ENCODE measurements at regions of chr6 and their contacts with region 1.

Region 1: DNA sequence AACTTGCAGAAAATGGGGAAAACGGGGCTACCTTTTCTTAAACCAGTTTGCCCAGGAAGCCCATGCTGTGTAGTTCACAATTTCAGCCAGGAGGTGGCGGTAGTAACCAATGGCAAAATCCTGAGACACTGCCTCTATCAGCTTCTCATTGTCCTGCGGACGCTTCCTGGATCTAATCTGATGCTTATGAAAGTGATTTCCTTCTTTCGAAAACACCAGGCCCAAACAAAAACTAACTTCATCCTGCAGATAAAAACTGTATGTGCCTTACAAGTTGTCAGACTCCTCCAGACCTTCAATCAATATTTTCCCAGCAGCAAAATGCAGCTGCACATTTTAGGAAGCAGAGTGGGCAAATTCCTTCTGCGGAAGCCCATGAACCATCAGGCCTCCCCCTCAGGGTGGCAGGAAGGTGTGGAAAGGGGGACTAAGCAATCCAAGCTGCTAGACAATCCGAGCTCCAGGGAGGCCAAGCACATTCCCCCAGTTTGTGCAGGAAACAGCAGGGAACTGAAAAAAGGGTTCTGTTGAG is 88.5 kb downstream of the LY86 start:
- DNase-seq: peak; percentile 64 to 95
- H3K4me3 ChIP-seq: no peak overlapping the region
- H3K27ac ChIP-seq: no peak overlapping the region
- H3K4me1 ChIP-seq: peaks cover 5 to 15% (median 11%) of the 10 kb centered on the region in 4 experiments
- H3K27me3 ChIP-seq: no peaks in the 10 kb centered on the region; a peak in 1 of 7 replicates
- CTCF ChIP-seq: peak; percentile 59 to 88 (median 86)
- EP300 ChIP-seq: no peak
- POLR2A ChIP-seq: no peak
- RAD21 ChIP-seq: peak; percentile 95

Region 2: GRCh38 chr6:6379573-6379972 is 297.4 kb before region 1 on chr6:
- CTCF ChIA-PET with region 1: no interaction called
- POLR2A ChIA-PET with region 1: no interaction called
- DNase-seq: no peak
- H3K4me3 ChIP-seq: no peak overlapping the region
- H3K27ac ChIP-seq: no peak overlapping the region
- H3K4me1 ChIP-seq: peaks cover 0 to 5% (median 3%) of the 10 kb centered on the region in 4 experiments; a peak in 4 of 7 replicates
- H3K27me3 ChIP-seq: no peaks in the 10 kb centered on the region
- CTCF ChIP-seq: no peak
- EP300 ChIP-seq: no peak
- POLR2A ChIP-seq: no peak
- RAD21 ChIP-seq: no peak

Region 3: GRCh38 chr6:6696867-6697531 is 20.0 kb after region 1 on chr6:
- CTCF ChIA-PET with region 1: interaction called, 87 read pairs
- POLR2A ChIA-PET with region 1: interaction called, 3 read pairs
- DNase-seq: peak; percentile 43 to 88
- H3K4me3 ChIP-seq: no peak overlapping the region
- H3K27ac ChIP-seq: no peak overlapping the region
- H3K4me1 ChIP-seq: peaks cover 19 to 28% (median 20%) of the 10 kb centered on the region in 4 experiments
- H3K27me3 ChIP-seq: no peaks in the 10 kb centered on the region; a peak in 1 of 7 replicates
- CTCF ChIP-seq: peak; percentile 85 to 88 (median 86)
- EP300 ChIP-seq: no peak
- POLR2A ChIP-seq: no peak
- RAD21 ChIP-seq: peak; percentile 85 to 92

Region 4: GRCh38 chr6:6724539-6725467 is 47.8 kb after region 1 on chr6:
- CTCF ChIA-PET with region 1: interaction called, 38 read pairs
- POLR2A ChIA-PET with region 1: no interaction called
- DNase-seq: peak; percentile 66 to 83
- H3K4me3 ChIP-seq: peak overlapping the region in 3 of 4 experiments; percentile 10 to 51 (median 27); a peak in 5 of 8 replicates
- H3K27ac ChIP-seq: peak overlapping the region; percentile 5; the same call in 1 of the 2 replicates
- H3K4me1 ChIP-seq: peaks cover 12 to 25% (median 20%) of the 10 kb centered on the region in 4 experiments
- H3K27me3 ChIP-seq: peaks cover 0 to 11% (median 2%) of the 10 kb centered on the region in 4 experiments; a peak in 2 of 7 replicates
- CTCF ChIP-seq: peak; percentile 53 to 62 (median 54); a peak in 3 of 4 replicates
- EP300 ChIP-seq: peak in 1 of 2 experiments; percentile 64; a peak in 1 of 3 replicates
- POLR2A ChIP-seq: peak in 1 of 2 experiments; percentile 67; a peak in 2 of 3 replicates
- RAD21 ChIP-seq: peak; percentile 82 to 85

Region 5: DNA sequence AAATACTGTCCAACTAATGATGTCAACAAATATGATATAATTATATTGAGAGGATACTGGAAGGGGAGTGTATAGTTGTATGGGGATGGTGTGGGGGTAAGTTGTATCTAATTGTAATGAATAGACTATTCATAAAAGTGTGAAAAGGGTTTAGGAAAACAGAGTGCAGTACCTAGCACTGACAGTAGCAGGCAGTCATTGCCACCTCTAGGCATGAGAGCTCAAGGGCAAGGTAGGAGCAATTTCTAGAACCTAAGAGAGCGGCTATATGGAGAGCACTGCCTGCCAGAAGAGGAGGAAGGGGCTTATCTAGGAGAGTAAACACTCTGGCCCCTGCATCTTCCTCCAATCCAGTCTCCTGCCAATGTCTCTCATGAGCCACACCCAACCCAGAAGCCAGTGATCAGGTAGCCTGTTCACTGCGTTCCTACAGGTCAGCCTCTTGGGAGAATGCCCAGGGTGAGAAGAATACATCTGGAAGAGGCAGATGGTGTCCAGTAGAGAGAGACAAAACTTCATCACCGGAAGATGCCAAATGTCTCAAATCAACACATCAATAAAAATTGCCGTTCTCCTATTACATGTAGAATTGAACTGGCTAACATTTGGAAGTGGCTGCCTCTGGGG is 111.5 kb after region 1 on chr6:
- CTCF ChIA-PET with region 1: interaction called, 10 read pairs
- POLR2A ChIA-PET with region 1: no interaction called
- DNase-seq: peak in 1 of 2 experiments; percentile 58
- H3K4me3 ChIP-seq: no peak overlapping the region
- H3K27ac ChIP-seq: no peak overlapping the region
- H3K4me1 ChIP-seq: no peaks in the 10 kb centered on the region; a peak in 1 of 7 replicates
- H3K27me3 ChIP-seq: no peaks in the 10 kb centered on the region
- CTCF ChIP-seq: peak; percentile 8 to 81 (median 69)
- EP300 ChIP-seq: no peak
- POLR2A ChIP-seq: no peak
- RAD21 ChIP-seq: peak; percentile 85 to 89

Region 6: GRCh38 chr6:7238900-7239589 is 562.1 kb after region 1 on chr6:
- CTCF ChIA-PET with region 1: interaction called, 15 read pairs
- POLR2A ChIA-PET with region 1: no interaction called
- DNase-seq: peak in 1 of 2 experiments; percentile 90
- H3K4me3 ChIP-seq: no peak overlapping the region
- H3K27ac ChIP-seq: no peak overlapping the region
- H3K4me1 ChIP-seq: peaks cover 9 to 23% (median 14%) of the 10 kb centered on the region in 4 experiments
- H3K27me3 ChIP-seq: no peaks in the 10 kb centered on the region
- CTCF ChIP-seq: peak; percentile 69 to 79 (median 79)
- EP300 ChIP-seq: no peak
- POLR2A ChIP-seq: no peak
- RAD21 ChIP-seq: peak; percentile 68 to 80

Measured in H1 (cell line).